MCF 10A (cell line): ENCODE measurements at regions of chr3 and their contacts with region 1.

Region 1: GRCh38 chr3:136984837-136985236 is 27.1 kb downstream of the IL20RB start:
- DNase-seq: peak; percentile 84
- H3K4me3 Mint-ChIP-seq: peak overlapping the region; percentile 3
- H3K27ac Mint-ChIP-seq: peak overlapping the region; percentile 57
- H3K4me1 Mint-ChIP-seq: peaks cover 63% of the 10 kb centered on the region
- H3K27me3 Mint-ChIP-seq: no peaks in the 10 kb centered on the region
- CTCF ChIP-seq: no peak

Region 2: DNA sequence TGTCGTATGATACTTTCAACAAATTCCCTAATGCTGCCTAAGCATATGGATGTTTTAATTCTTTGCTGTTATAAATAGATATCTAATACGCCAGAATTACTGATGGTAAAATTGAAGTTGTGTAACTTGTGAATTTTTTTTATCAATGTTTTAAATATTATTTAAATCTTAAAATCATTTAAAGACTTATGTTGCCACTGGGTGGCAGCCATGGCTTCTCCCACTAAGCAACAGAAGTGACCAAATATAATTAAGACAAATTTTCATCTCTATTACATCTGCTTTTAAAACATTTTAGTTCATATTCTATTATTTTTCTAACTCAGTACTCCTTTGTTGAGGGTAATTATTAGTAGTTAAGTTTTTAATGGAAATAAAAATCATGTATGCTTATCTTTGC is 35.1 kb before region 1 on chr3:
- CTCF ChIA-PET with region 1: interaction called, 9 read pairs
- POLR2A ChIA-PET with region 1: interaction called, 452 read pairs
- intact Hi-C with region 1: no loop called
- DNase-seq: no peak
- H3K4me3 Mint-ChIP-seq: no peak overlapping the region
- H3K27ac Mint-ChIP-seq: no peak overlapping the region
- H3K4me1 Mint-ChIP-seq: peaks cover 42% of the 10 kb centered on the region
- H3K27me3 Mint-ChIP-seq: no peaks in the 10 kb centered on the region
- CTCF ChIP-seq: peak; percentile 12

Region 3: GRCh38 chr3:136974670-136975069 is 10.2 kb before region 1 on chr3:
- CTCF ChIA-PET with region 1: interaction called, 4 read pairs
- POLR2A ChIA-PET with region 1: interaction called, 17 read pairs
- intact Hi-C with region 1: no loop called
- DNase-seq: no peak
- H3K4me3 Mint-ChIP-seq: no peak overlapping the region
- H3K27ac Mint-ChIP-seq: peak overlapping the region; percentile 69
- H3K4me1 Mint-ChIP-seq: peaks cover 41% of the 10 kb centered on the region
- H3K27me3 Mint-ChIP-seq: no peaks in the 10 kb centered on the region
- CTCF ChIP-seq: no peak

Region 4: DNA sequence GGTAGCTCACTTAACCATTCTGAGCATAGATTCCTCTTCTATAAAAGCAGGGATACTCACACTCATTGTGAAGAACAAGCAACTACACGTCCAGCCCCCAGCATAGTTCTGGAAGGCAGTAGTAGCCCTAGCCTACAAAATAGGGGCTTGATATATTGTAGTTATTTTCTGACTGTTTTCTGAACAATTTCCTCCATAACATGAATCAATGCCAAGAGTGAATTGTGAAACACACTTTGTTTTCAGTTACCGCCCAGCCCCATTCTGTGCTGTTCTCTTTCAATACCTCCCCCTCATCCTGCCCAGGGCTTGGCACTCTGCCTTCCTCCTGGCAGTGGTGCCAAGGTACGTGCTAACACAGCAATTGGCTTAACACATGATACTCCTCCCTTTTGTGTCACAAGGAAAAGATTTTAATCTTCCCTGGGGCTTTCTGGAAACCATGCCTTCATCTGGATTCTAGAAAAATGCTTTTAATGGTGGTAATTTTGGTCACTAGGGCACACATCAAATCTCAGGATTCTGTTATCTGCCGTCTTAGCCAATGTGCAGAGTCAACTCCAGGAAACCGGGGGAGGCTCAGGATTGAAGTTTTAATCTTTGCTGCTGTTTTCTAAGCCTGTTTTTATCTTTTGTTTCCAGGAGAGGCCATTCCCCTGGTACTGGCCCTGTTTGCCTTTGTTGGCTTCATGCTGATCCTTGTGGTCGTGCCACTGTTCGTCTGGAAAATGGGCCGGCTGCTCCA is 10.1 kb after region 1 on chr3:
- CTCF ChIA-PET with region 1: interaction called, 12 read pairs
- POLR2A ChIA-PET with region 1: interaction called, 74 read pairs
- intact Hi-C with region 1: no loop called
- DNase-seq: peak; percentile 99
- H3K4me3 Mint-ChIP-seq: peak overlapping the region; percentile 42
- H3K27ac Mint-ChIP-seq: peak overlapping the region; percentile 94
- H3K4me1 Mint-ChIP-seq: peaks cover 61% of the 10 kb centered on the region
- H3K27me3 Mint-ChIP-seq: no peaks in the 10 kb centered on the region
- CTCF ChIP-seq: no peak